ENCODE measurements at regions of chr20 and their contacts with region 1.

Region 1: DNA sequence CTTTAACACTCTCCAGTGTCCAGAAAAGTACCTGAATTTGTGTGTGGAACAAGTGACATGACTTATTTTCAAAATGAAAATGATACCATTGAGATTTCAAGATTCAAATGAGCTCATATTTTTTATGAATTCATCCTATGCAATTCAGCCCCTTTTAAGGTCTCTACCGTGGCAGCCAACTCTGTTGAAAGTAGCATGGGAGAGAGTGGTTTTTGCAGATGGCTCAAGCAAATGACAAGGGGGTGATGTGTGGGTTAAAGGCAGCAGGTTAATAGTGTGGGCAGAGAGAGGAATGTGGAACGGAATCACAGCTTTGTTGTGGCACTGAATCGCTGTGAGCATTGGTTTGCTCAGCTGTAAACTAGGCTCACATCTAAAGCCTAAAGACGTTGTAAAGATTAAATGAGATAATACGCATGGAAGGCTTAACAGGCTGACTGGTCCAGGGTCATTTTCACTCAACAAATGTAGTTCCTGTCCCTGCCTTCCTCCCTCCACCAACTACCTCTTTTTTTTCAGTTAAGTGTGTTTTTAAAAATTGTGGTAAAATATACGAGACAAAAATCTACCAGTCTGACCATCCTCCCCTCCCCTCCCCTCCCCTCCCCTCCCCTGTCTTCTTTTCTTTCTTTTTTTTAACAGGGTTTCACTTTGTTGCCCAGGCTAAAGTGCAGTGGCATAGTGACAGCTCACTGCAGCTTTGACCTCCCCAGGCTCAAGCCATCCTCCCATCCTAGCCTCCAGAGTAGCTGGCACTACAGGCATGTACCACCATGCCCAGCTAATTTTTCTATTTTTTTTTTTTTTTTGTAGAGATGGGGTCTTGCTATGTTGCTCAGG is 114.7 kb upstream of the ZNF217 start:
- DNase-seq: peak; percentile 84
- H3K4me3 Mint-ChIP-seq: peak overlapping the region; percentile 57
- H3K27ac Mint-ChIP-seq: peak overlapping the region; percentile 93
- H3K4me1 Mint-ChIP-seq: peaks cover 52% of the 10 kb centered on the region
- H3K27me3 Mint-ChIP-seq: no peaks in the 10 kb centered on the region

Region 2: GRCh38 chr20:53578492-53579222 is 129.7 kb before region 1 on chr20:
- intact Hi-C with region 1: loop called (anchors 1 kb)
- DNase-seq: peak; percentile 92
- H3K4me3 Mint-ChIP-seq: peak overlapping the region; percentile 82
- H3K27ac Mint-ChIP-seq: peak overlapping the region; percentile 82
- H3K4me1 Mint-ChIP-seq: peaks cover 75% of the 10 kb centered on the region
- H3K27me3 Mint-ChIP-seq: no peaks in the 10 kb centered on the region

Region 3: DNA sequence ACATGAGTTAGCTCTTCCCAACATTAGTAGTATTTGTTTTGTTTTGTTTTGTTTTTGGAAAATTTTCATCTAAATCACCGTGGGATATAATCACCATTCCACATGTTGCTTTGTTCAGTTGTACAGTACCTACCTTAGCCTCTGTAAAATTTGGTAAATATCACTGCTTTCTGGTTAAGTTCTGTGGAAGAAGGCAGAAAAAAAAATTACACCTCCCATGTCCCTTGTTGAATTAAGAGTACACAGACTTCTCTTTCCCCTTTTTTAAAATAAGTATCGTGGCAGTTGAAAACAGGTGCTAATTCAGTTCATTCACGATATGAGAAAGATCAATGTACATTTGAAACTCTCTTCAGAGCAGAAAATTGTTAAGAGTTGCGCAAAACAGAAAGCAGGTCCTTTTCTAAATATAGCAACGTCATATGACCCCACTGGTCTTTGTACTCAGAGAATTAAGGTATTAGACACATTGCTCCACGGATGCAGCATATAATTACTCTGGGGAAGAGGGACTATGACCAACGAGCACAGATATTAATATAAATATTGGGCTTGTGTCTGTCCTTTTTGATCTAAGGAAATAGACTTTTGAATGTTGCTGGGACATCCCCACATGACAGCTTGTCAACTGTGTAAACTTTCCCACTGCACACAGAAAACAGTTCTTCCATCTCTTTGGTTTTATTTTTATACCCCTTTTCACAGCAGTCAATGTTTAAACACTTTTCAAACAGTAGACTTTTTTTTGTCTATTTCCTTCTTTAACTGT is 56.1 kb before region 1 on chr20:
- intact Hi-C with region 1: loop called (anchors 1 kb)
- DNase-seq: peak; percentile 76
- H3K4me3 Mint-ChIP-seq: peak overlapping the region; percentile 87
- H3K27ac Mint-ChIP-seq: peak overlapping the region; percentile 99
- H3K4me1 Mint-ChIP-seq: peaks cover 40% of the 10 kb centered on the region
- H3K27me3 Mint-ChIP-seq: no peaks in the 10 kb centered on the region

Region 4: DNA sequence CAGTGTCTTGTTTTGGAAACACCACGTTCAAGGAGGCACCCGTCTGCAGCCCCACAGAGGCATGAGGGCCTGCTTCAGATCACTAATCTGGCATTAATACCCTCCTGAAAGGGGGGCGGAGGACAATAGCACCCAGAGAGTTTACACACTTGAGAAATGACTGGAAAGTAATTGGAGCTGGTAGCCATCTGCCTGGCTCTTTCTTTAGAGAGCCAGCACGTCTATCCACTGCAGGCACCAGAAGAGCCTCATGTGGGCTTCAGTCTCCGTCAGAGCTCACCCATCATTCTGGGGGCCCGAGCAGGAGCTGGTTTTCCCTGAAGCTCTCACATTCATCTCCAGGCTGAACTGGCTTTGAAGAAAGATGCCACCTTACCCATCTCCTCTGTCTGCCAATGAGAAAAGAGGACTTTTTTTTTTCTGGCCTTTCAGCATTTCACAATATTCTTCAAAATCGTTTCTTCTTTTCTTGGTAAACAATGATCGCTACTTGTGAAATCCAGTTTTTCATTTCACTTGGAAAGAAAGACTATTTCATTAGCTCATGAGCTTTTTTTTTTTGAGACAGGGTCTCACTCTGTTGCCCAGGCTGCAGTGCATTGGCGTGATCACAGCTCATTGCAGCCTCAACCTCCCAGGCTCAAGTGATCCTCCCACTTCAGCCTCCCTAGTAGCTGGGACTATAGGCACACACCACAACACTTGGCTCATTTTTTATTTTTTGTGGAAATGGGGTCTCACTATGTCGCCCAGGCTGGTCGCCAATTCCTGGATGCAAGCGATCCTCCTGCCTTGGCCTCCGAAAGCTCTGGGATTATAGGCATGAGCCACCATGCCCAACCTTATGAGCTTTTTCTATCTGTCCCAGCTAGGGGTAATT is 10.0 kb after region 1 on chr20:
- intact Hi-C with region 1: loop called (anchors 1 kb)
- DNase-seq: no peak
- H3K4me3 Mint-ChIP-seq: no peak overlapping the region
- H3K27ac Mint-ChIP-seq: no peak overlapping the region
- H3K4me1 Mint-ChIP-seq: peaks cover 15% of the 10 kb centered on the region
- H3K27me3 Mint-ChIP-seq: no peaks in the 10 kb centered on the region

Region 5: DNA sequence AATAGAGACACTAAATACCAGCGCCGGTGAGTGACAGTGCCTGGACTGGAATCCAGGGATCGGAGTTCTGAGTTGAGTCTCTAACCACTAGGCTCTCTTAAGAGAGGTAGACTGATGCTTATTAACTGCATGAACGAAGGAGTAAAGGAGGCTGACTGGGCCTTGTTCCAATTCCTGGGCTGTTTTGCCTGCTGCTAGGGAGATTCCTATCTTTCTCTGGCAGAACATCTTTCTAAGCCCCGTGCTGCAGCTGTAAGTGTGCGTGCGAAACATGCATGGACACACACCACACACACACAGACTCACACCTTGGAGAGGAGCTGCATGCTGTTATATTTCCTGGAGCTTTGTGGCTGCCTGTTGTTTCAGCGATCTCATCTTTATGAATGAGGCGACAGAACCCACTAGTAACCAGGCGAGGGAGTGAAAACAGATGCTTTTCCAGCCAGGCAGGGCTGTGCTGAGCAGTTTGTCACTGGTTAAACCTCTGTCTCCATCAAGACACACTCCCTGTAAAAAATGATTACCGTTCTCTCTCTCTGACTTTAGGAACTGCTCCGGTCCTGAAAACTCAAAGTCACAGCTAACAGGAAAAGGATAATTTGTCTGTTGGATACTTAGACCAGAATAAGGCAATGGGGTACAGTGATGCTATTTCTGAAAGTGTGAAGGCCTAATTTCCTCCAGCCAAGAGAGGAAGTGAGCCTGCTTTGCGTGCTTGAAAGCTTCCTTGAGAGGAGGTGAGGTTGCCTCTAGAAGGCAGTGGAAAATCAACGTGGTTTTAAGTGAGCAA is 42.7 kb after region 1 on chr20:
- intact Hi-C with region 1: loop called (anchors 1 kb)
- DNase-seq: peak; percentile 89
- H3K4me3 Mint-ChIP-seq: peak overlapping the region; percentile 51
- H3K27ac Mint-ChIP-seq: peak overlapping the region; percentile 98
- H3K4me1 Mint-ChIP-seq: peaks cover 63% of the 10 kb centered on the region
- H3K27me3 Mint-ChIP-seq: no peaks in the 10 kb centered on the region

Region 6: GRCh38 chr20:53891306-53891944 is 183.1 kb after region 1 on chr20:
- intact Hi-C with region 1: loop called (anchors 1 kb)
- DNase-seq: no peak
- H3K4me3 Mint-ChIP-seq: no peak overlapping the region
- H3K27ac Mint-ChIP-seq: no peak overlapping the region
- H3K4me1 Mint-ChIP-seq: peaks cover 43% of the 10 kb centered on the region
- H3K27me3 Mint-ChIP-seq: no peaks in the 10 kb centered on the region

Region 7: DNA sequence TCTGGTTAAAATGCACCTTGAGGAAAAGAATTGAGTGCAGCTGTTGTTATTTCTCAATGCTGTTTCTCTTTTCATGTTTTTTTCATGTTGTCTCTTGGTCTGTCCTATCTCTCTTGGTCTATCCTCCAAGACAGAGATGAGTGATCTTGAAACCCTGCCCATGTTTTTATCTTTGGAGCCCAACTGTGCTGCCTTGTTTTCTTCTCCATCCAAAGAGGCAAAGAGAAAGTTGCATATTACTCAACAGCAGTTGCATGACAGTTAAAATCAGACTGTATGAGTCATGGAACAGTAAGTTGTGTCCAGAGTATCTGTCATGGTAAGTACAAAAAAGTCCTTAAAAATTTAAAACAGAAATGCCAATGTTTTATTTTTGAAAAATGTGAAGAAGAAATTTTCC is 335.8 kb after region 1 on chr20:
- intact Hi-C with region 1: loop called (anchors 10 kb)
- DNase-seq: peak; percentile 63
- H3K4me3 Mint-ChIP-seq: peak overlapping the region; percentile 38
- H3K27ac Mint-ChIP-seq: peak overlapping the region; percentile 67
- H3K4me1 Mint-ChIP-seq: peaks cover 18% of the 10 kb centered on the region
- H3K27me3 Mint-ChIP-seq: peaks cover 9% of the 10 kb centered on the region

Measured in activated CD4-positive, alpha-beta T cell treated with anti-CD3 and anti-CD28 coated beads, Interleukin-2, amount 10 ng/mL, durations not matched to agents 24 days and 14 days (primary cell).